Right ventricle myocardium inferior (tissue), 1 donor: ENCODE measurements at regions of chr20 and their contacts with region 1.

Region 1: GRCh38 chr20:9616833-9617489 is 102.6 kb downstream of the LAMP5 start:
- DNase-seq: peak; percentile 70
- ATAC-seq: peak; percentile 44

Region 2: DNA sequence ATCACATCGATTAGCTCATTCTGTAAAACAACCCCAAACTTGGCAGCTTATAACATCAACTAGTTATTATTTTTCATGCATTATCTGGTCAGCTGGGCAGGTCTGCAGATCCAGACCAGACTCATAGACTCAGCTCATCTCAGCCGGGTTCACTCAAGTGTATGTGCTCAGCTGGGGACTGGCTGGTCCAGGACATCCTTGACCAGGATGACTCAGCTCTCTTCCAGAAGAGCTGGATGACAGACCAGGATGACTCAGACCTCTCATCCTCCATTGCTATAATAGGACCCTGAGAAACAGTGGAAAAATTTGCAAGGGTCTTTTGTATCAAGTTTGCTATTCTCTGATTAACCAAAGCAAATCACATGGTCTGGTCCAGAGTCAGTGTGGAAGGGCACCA is 860.6 kb before region 1 on chr20:
- intact Hi-C with region 1: loop called (anchors 10 kb)
- DNase-seq: no peak
- ATAC-seq: peak; percentile 34

Region 3: GRCh38 chr20:9344083-9344920 is 272.7 kb before region 1 on chr20:
- intact Hi-C with region 1: no loop called
- DNase-seq: no peak
- ATAC-seq: peak; percentile 59

Region 4: GRCh38 chr20:9488063-9488462 is 128.9 kb before region 1 on chr20:
- intact Hi-C with region 1: no loop called
- DNase-seq: no peak
- ATAC-seq: no peak

Region 5: DNA sequence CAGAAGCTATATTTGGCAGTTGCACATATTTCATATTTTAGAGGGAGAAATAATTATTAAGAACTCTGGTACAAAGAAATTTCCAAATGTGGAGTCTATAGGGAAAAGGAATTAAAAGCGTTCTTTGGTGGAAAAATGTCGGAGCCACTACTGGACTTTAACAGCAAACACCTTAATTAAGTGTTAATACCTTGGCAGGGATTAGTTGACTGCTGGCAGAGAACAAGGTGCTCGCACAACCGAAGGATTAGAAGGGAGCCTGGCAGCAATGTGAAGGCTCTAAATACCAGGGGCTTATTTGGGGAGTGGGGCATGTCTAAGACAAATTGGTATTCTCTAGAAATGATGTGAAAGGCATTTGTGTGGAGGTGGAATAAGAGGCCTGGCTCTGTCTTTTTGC is 123.0 kb after region 1 on chr20:
- intact Hi-C with region 1: no loop called
- DNase-seq: no peak
- ATAC-seq: no peak

Region 6: DNA sequence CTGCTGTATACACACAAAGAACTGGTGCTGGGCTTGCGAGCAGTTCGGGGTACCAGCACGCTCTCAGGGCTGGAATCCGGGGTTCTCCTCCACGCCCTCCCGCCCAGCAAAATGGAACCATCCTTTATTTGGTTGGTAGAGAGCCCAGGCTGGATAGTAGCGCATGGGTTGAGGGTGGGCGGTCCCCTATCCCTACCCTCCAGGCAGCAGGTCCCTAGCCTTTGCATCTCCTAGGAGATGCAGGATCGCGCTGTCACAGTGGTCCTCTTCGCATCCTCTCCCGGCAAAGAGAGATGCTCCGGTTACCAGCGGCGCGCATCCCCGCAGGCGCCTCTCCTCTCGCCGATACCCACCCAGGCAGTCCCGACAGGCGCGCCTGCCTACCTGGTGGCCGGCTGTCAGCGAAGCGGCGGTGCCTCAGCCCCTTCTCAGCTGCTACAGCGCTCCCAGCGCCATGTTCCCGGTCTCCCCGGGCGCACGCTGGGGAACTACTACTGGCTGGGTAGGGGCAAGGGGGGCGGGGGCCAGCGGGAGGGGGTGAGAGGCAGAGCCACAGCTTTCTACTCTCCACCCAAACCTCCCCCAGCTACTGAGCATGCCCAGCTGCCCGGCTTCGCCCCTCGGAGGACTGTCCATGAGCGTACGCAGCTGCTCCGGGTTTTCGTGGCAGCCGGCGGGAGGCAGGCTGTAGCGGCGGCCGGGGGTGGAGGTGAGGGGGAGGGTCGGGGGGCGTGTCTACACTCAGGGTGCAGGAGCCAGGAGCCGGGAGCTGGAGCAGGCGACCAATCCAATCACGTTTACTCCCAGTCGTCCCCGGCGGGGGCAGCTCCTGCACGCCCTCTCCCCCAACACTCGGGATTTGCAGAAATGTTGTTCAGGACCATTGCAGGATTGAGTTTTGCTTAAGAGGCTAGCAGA is 221.7 kb after region 1 on chr20 and contains the start of gene PAK5:
- intact Hi-C with region 1: no loop called
- DNase-seq: no peak
- ATAC-seq: no peak
- total RNA-seq, gene PAK5: not detected

Region 7: GRCh38 chr20:9912858-9913434 is 296.0 kb after region 1 on chr20:
- intact Hi-C with region 1: loop called (anchors 5 kb)
- DNase-seq: no peak
- ATAC-seq: no peak

Region 8: DNA sequence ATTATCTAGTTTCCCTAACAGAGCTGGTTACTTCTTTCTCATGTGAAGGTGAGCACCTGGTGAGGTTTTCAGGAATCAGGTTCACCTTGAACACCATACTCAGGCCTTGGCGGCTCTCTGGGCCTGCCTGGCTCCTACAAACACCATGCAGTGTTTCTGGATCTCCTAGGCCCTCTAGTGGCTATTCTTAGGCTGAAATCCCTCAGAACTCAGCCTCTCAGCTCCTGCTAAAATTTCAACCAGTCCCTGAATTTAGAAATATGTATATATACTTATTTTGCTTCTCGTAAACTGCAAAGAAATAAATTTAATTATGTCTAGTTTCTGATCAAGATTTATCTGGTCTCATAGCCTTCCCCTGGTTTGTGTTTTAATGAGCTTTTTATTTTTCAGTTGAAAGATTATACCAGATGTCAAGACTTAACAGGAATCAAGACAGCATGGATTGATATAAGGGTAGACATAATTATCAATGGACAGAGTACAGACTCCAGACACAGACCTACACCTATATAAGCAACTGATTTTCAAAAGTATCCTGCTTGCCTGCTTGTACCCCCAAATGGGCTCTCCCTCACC is 473.7 kb after region 1 on chr20:
- intact Hi-C with region 1: loop called (anchors 5 kb)
- DNase-seq: no peak
- ATAC-seq: peak; percentile 67

Region 9: DNA sequence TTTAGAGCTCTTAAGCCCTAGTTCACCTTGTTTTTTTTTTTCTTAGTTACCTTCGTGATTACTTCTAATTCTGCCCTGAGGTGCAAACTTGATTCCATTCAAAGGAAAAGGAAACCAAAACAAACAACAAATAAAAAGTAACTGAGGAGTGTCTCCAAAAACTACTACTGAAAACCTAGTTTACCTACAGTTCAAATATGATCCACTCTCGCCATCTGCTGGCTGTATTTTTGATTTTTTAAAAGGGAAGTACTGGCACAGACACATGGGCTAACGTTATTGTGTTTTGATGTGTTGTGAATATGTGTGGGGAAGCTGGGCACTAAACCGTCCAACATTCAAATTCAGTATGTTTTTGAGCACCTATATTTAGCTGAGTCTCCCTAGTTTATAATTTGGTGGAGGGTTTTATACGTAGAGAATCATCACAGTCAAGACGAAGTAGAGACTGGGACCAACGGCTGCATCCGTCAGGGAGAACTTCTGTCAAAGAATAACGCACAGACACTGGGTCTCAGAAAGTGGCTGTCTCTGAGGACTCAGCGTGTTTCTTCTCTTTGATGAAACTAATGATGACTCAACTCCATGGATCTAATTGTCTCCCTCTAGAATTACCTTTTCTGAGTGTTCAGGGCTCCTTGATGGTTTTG is 1927.2 kb after region 1 on chr20:
- intact Hi-C with region 1: loop called (anchors 5 kb)
- DNase-seq: no peak
- ATAC-seq: no peak